PC-9 (cell line): ENCODE measurements at regions of chr2 and their contacts with region 1.

Region 1: GRCh38 chr2:111667542-111668273 is 216.3 kb downstream of the ANAPC1 start:
- DNase-seq: peak; percentile 58 to 80
- H3K4me3 ChIP-seq: no peak overlapping the region
- H3K27ac ChIP-seq: peak overlapping the region; percentile 50
- H3K4me1 ChIP-seq: peaks cover 11% of the 10 kb centered on the region
- H3K27me3 ChIP-seq: no peaks in the 10 kb centered on the region
- CTCF ChIP-seq: peak; percentile 72

Region 2: DNA sequence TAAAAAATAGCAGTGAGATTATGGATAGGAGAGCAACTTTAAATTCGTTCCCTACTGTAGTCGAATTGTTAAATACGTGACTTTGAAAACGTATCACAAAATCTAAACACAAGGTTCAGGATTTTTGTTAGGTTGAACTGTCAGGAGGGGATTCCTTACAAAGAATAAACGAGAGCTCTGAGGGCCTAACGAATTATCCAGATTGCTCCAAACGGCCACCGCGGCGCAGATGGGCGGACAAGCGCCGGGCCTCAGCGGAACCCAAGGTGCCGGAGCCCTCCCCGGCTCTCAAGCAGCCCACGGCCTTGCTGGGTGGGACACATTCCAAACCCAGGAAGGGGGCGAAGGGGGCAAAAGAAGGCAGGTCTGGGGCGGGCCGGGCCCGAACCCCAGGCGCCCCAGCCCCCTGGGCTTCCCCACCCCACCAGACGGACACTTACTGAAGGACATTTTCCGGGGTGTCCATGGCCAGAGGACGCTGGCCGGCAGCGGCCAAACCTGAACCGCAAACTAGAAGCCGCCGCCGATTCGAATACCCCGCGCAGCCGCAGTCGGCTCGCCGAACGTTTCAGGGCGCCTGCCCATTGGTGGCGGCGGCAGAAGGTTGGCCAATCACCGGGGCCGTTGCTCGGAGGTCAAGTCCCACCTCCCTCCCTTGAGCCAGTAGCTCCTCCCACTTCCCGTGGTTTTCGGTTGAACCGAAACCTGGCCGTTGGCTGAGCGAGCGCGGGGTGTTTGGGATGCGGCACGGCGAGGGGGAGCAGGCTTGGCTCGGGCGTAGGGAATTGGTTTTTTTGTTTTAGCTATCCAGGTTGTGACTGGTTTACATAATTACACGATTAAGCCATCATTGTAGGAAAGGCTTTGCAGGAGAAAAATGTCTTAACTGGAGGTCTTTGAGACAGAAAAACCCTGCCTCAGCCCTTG is 989.9 kb before region 1 on chr2 and contains the start of gene BUB1:
- CTCF ChIA-PET with region 1: no interaction called
- POLR2A ChIA-PET with region 1: no interaction called
- intact Hi-C with region 1: loop called (anchors 10 kb)
- DNase-seq: peak; percentile 90 to 95
- H3K4me3 ChIP-seq: peak within 1 kb of the TSS; percentile 78
- H3K27ac ChIP-seq: peak within 1 kb of the TSS; percentile 90
- H3K4me1 ChIP-seq: peaks cover 35% of the 10 kb centered on the region
- H3K27me3 ChIP-seq: no peaks in the 10 kb centered on the region
- CTCF ChIP-seq: no peak
- total RNA-seq, gene BUB1: 45.7 and 74.6 TPM in 2 replicates

Region 3: GRCh38 chr2:110807522-110807921 is 860.2 kb before region 1 on chr2:
- CTCF ChIA-PET with region 1: no interaction called
- POLR2A ChIA-PET with region 1: no interaction called
- intact Hi-C with region 1: loop called (anchors 1 kb)
- DNase-seq: no peak
- H3K4me3 ChIP-seq: no peak overlapping the region
- H3K27ac ChIP-seq: no peak overlapping the region
- H3K4me1 ChIP-seq: no peaks in the 10 kb centered on the region
- H3K27me3 ChIP-seq: no peaks in the 10 kb centered on the region
- CTCF ChIP-seq: no peak

Region 4: DNA sequence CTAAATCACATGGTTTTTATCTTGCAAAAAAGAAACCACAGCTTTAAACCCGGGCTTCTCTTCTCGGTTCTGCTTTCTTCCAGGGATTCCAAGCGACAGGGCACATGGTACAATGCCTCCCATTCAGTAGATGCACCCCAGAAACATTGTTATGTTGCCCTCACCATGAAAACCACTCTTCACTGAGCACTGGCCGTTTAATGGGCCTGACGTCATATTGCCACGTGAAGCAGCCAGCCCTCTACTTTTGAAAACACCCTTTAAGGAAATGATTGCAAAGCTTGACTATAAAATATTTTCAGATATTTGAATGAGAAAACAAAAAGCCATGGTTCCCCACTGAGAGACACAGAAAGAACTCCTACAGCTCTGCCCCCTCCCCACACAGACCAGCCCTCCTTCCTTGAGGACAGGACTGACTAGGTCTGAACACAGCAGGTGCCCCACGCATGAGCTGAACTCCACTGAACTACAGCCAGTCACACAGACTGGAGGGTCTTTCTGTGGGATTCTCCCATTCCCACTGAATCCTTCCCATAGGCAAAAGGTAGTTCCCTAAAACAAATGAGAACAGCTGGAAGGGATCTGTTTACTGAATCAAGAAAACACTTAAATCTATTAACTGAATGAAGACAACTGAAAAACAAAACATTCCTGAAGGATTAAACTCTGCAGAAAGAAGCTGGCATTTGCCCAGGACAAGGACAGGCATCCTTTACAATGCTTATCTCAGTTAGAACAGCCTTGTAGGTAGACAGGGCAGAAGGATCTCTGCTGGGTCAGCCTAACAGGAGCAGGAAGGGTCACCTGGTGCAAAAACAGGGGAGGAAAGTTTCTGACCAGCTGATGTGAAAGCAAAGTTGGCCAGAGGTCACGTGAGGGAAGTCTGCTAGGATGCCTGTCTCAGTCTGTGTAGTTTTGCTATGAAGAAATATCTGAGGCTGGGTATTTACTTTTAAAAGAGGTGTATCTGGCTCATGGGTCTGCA is 132.6 kb before region 1 on chr2:
- CTCF ChIA-PET with region 1: interaction called, 11 read pairs
- POLR2A ChIA-PET with region 1: no interaction called
- intact Hi-C with region 1: no loop called
- DNase-seq: peak; percentile 48 to 70
- H3K4me3 ChIP-seq: no peak overlapping the region
- H3K27ac ChIP-seq: peak overlapping the region; percentile 58
- H3K4me1 ChIP-seq: peaks cover 27% of the 10 kb centered on the region
- H3K27me3 ChIP-seq: no peaks in the 10 kb centered on the region
- CTCF ChIP-seq: no peak